Prostate gland (tissue), 2 donors: ENCODE measurements at regions of chr12 and their contacts with region 1.

Region 1: GRCh38 chr12:49088190-49088931 is 6.2 kb downstream of the DHH start:
- DNase-seq: peak; percentile 68
- H3K4me3 ChIP-seq: no peak overlapping the region
- H3K27ac ChIP-seq: no peak overlapping the region
- H3K4me1 ChIP-seq: peaks cover 5% of the 10 kb centered on the region
- H3K27me3 ChIP-seq: peaks cover 27% of the 10 kb centered on the region
- CTCF ChIP-seq: peak; percentile 68 to 88 (median 80)
- POLR2A ChIP-seq: no peak

Region 2: DNA sequence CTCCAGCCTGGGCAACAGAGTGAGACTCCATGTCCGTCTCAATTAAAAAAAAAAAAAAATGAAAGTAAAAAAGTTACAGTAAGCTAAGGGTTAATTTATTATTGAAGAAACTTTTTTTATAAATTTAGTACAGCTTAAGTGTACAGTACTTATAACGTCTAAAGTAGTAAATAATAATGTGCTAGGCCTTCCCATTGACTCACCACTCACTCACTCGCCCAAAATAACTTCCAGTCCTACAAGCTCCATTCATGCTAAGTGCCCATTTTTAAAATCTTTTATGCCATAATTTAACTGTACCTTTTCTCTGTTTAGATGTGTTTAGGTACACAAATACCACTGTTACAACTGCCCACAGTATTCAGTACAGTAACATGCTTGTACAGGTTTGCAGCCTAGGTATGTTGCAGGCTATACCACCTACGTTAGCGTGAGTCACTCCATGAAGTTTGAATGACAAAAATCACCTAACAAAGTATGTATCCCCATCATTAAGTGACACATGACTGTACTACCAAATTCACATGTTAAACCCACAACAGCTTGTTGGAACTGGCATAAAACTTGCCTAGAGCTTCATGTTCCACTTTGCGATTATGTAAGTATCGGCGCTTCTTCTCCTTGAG is 417.0 kb before region 1 on chr12:
- intact Hi-C with region 1: no loop called
- DNase-seq: no peak
- H3K4me3 ChIP-seq: no peak overlapping the region
- H3K27ac ChIP-seq: no peak overlapping the region
- H3K4me1 ChIP-seq: no peaks in the 10 kb centered on the region
- H3K27me3 ChIP-seq: no peaks in the 10 kb centered on the region
- CTCF ChIP-seq: no peak
- POLR2A ChIP-seq: no peak

Region 3: GRCh38 chr12:49121047-49121696 is 32.8 kb after region 1 on chr12:
- intact Hi-C with region 1: loop called (anchors 2 kb)
- DNase-seq: peak; percentile 36
- H3K4me3 ChIP-seq: no peak overlapping the region
- H3K27ac ChIP-seq: no peak overlapping the region
- H3K4me1 ChIP-seq: no peaks in the 10 kb centered on the region
- H3K27me3 ChIP-seq: no peaks in the 10 kb centered on the region
- CTCF ChIP-seq: peak in 3 of 4 experiments; percentile 45 to 56 (median 56)
- POLR2A ChIP-seq: no peak

Region 4: GRCh38 chr12:49188914-49189367 is 100.6 kb after region 1 on chr12 and contains the start of gene TUBA1A:
- intact Hi-C with region 1: loop called (anchors 10 kb)
- DNase-seq: peak; percentile 86
- H3K4me3 ChIP-seq: peak within 1 kb of the TSS; percentile 63 to 77
- H3K27ac ChIP-seq: peak within 1 kb of the TSS; percentile 93 to 98
- H3K4me1 ChIP-seq: peaks cover 2% of the 10 kb centered on the region
- H3K27me3 ChIP-seq: no peaks in the 10 kb centered on the region
- CTCF ChIP-seq: no peak
- POLR2A ChIP-seq: peak; percentile 89
- total RNA-seq, gene TUBA1A: 81.6 to 253 TPM